Activated CD8-positive, alpha-beta memory T cell treated with anti-CD3 and anti-CD28 coated beads, Interleukin-2, amount 10 ng/mL, durations not matched to agents 7 days and 5 days (primary cell): ENCODE measurements at regions of chr14 and their contacts with region 1.

Region 1: DNA sequence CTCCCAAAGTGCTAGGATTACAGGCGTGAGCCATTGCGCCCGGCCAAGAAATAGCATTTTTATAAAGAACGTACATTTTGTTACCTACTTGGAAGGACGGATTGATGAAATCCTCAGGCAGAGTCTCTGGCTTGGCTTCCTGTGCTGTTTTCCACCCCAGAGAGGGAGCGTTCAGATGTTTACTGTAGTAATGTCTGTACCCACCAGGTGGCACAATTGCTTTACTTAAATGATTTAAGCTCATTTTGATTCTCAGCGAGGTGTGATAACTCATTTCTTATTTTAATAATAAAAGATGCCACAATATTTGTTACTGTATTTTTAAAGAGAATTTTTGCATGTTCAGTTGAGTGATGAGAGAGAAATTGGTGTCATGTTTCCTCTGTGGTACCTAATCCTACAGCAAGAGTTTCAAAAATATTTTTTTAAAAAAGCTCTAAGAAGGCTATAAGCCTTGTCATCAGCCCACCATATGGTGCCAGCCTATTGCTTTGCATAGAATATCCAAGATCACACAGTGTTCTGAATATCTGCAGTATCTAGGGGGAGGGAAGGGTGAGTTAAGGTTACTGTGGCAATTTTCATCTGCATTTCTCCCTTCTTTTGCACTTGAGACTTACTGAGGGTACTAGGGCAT is 82.6 kb upstream of the TRAF3 start:
- DNase-seq: peak; percentile 68
- ATAC-seq: peak; percentile 58
- H3K4me3 Mint-ChIP-seq: no peak overlapping the region
- H3K27ac Mint-ChIP-seq: no peak overlapping the region
- H3K4me1 Mint-ChIP-seq: peaks cover 8% of the 10 kb centered on the region
- H3K27me3 Mint-ChIP-seq: no peaks in the 10 kb centered on the region

Region 2: DNA sequence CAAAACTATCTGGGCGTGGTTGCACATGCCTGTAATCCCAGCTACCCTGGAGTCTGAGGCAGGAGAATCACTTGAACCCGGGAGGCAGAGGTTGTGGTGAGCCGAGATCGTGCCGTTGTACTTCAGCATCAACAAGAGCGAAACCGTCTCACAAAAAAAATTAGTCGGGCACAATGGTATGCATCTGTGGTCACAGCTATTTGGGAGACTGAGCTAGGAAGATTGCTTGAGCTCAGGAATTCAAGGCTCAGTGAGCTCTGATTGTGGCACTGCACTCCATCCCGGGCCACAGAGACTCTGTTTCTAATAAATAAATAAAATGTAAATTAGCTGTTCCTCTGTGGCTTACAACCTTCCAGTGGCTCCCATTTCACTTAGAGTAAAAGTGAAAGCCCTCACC is 74.2 kb before region 1 on chr14:
- CTCF ChIA-PET with region 1: no interaction called
- DNase-seq: no peak
- ATAC-seq: no peak
- H3K4me3 Mint-ChIP-seq: no peak overlapping the region
- H3K27ac Mint-ChIP-seq: no peak overlapping the region
- H3K4me1 Mint-ChIP-seq: peaks cover 21% of the 10 kb centered on the region
- H3K27me3 Mint-ChIP-seq: no peaks in the 10 kb centered on the region

Region 3: DNA sequence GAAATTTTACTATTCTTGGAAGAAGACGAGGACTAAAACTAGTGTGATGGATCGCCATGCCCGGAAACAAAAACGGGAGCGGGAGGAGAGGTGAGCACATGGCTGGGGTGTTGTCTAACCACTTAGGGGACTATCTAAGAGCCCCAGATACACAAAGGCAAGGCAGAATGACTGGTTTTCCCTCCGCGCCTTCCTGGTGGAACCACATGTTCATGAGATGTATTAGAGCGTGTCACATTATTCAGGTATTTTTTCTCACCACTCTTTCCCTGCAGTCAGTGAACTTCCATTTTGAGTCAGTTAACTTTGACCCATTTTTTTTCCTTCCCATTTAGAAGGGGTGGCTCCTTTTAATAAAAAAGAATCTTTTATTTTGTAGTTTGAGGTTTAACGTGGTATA is 13.8 kb after region 1 on chr14:
- CTCF ChIA-PET with region 1: interaction called, 12 read pairs
- DNase-seq: no peak
- ATAC-seq: no peak
- H3K4me3 Mint-ChIP-seq: no peak overlapping the region
- H3K27ac Mint-ChIP-seq: no peak overlapping the region
- H3K4me1 Mint-ChIP-seq: no peaks in the 10 kb centered on the region
- H3K27me3 Mint-ChIP-seq: no peaks in the 10 kb centered on the region

Region 4: DNA sequence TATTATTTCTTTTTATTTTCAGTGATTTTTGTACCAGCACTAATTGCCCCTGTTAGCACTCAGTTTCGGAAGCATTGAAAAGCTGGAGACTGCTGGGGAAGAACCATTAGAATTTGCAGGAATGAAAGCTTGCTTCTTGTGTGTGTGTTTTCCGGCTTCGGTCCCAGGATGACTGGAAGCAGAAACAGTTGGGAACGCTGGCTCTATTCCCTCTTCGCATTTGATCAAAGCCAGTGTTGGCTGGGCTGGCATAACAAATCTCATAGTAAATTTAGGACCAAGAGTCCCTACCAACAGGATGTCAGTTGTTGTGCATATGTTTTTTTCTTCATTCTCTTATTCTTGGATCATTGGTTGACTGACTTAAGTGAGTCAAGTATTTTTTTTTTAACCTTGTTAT is 29.0 kb after region 1 on chr14:
- CTCF ChIA-PET with region 1: interaction called, 11 read pairs
- DNase-seq: no peak
- ATAC-seq: no peak
- H3K4me3 Mint-ChIP-seq: no peak overlapping the region
- H3K27ac Mint-ChIP-seq: no peak overlapping the region
- H3K4me1 Mint-ChIP-seq: no peaks in the 10 kb centered on the region
- H3K27me3 Mint-ChIP-seq: no peaks in the 10 kb centered on the region

Region 5: GRCh38 chr14:102774391-102775153 is 79.9 kb after region 1 on chr14:
- CTCF ChIA-PET with region 1: interaction called, 23 read pairs
- DNase-seq: peak; percentile 74
- ATAC-seq: peak; percentile 37
- H3K4me3 Mint-ChIP-seq: no peak overlapping the region
- H3K27ac Mint-ChIP-seq: peak overlapping the region; percentile 82
- H3K4me1 Mint-ChIP-seq: peaks cover 36% of the 10 kb centered on the region
- H3K27me3 Mint-ChIP-seq: no peaks in the 10 kb centered on the region

Region 6: GRCh38 chr14:102917469-102918211 is 223.0 kb after region 1 on chr14:
- CTCF ChIA-PET with region 1: interaction called, 12 read pairs
- DNase-seq: peak; percentile 77
- ATAC-seq: peak; percentile 61
- H3K4me3 Mint-ChIP-seq: no peak overlapping the region
- H3K27ac Mint-ChIP-seq: no peak overlapping the region
- H3K4me1 Mint-ChIP-seq: peaks cover 5% of the 10 kb centered on the region
- H3K27me3 Mint-ChIP-seq: no peaks in the 10 kb centered on the region